Prostate gland (tissue), 2 donors: ENCODE measurements at regions of chr22 and their contacts with region 1.

Region 1: DNA sequence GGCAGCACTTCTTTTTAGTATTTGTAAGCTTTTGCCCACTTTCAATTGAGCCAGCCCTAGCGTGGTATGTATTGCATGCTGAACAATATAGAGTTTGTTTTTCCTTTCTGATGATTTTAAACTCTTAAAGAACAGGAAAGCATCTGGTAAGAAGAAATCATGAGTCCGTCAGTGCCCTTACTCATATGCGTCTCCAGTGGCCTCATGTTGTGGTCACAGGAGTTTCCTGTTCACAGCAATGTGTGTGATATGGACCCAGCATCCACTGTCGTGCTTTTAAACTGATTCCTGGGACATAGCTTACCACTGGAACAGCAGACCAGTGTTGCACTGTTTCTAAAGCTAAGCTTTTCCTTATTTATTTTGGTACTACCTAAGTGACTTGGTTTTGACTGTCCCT is 40.1 kb downstream of the BID start:
- DNase-seq: no peak
- H3K4me3 ChIP-seq: no peak overlapping the region
- H3K27ac ChIP-seq: no peak overlapping the region
- H3K4me1 ChIP-seq: no peaks in the 10 kb centered on the region
- H3K27me3 ChIP-seq: no peaks in the 10 kb centered on the region
- CTCF ChIP-seq: no peak
- POLR2A ChIP-seq: no peak

Region 2: GRCh38 chr22:17606496-17606895 is 127.7 kb before region 1 on chr22:
- intact Hi-C with region 1: no loop called
- DNase-seq: no peak
- H3K4me3 ChIP-seq: no peak overlapping the region
- H3K27ac ChIP-seq: no peak overlapping the region
- H3K4me1 ChIP-seq: peaks cover under 1% of the 10 kb centered on the region
- H3K27me3 ChIP-seq: no peaks in the 10 kb centered on the region
- CTCF ChIP-seq: no peak
- POLR2A ChIP-seq: no peak

Region 3: DNA sequence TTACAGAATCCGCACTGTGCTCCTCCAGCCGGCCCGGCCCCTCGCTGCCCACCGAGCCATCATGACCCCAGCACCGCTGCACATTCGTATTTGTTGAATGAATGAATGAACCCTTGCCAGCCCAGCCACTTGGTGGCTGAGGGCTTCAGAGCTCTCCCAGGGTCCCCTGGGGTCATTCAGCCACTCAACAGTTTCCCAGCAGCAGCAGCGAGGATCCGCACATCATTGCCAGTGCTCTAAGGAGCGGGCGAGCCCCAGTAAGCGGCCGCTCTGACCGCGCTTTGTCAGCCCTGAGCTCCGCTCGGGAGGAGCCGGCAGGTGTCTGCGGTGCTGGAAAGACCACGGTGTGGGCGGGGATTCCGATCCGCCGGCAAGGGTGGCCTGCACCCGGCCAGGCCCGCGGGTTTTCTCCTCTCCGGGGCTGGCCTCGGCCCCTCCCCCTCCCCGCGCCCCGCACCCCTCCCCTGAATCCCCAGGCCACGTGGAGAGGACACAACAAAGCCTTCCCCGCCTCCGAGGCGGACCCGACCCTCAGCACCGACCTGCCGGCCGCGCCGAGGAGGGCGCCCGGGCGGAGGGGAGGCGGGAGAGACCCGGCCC is 39.5 kb after region 1 on chr22:
- intact Hi-C with region 1: loop called (anchors 5 kb)
- DNase-seq: no peak
- H3K4me3 ChIP-seq: peak overlapping the region; percentile 83 to 85
- H3K27ac ChIP-seq: peak overlapping the region; percentile 10 to 53
- H3K4me1 ChIP-seq: no peaks in the 10 kb centered on the region
- H3K27me3 ChIP-seq: no peaks in the 10 kb centered on the region
- CTCF ChIP-seq: no peak
- POLR2A ChIP-seq: no peak

Region 4: GRCh38 chr22:17867160-17867785 is 133.1 kb after region 1 on chr22:
- intact Hi-C with region 1: no loop called
- DNase-seq: no peak
- H3K4me3 ChIP-seq: no peak overlapping the region
- H3K27ac ChIP-seq: no peak overlapping the region
- H3K4me1 ChIP-seq: peaks cover 4% of the 10 kb centered on the region
- H3K27me3 ChIP-seq: no peaks in the 10 kb centered on the region
- CTCF ChIP-seq: no peak
- POLR2A ChIP-seq: no peak

Region 5: GRCh38 chr22:17891481-17892167 is 157.4 kb after region 1 on chr22:
- intact Hi-C with region 1: loop called (anchors 10 kb)
- DNase-seq: peak; percentile 70
- H3K4me3 ChIP-seq: no peak overlapping the region
- H3K27ac ChIP-seq: peak overlapping the region; percentile 70 to 80
- H3K4me1 ChIP-seq: peaks cover under 1% of the 10 kb centered on the region
- H3K27me3 ChIP-seq: no peaks in the 10 kb centered on the region
- CTCF ChIP-seq: peak in 3 of 4 experiments; percentile 25 to 48 (median 47)
- POLR2A ChIP-seq: no peak